Spleen (tissue), 13 donors: ENCODE measurements at regions of chr14 and their contacts with region 1.

Region 1: DNA sequence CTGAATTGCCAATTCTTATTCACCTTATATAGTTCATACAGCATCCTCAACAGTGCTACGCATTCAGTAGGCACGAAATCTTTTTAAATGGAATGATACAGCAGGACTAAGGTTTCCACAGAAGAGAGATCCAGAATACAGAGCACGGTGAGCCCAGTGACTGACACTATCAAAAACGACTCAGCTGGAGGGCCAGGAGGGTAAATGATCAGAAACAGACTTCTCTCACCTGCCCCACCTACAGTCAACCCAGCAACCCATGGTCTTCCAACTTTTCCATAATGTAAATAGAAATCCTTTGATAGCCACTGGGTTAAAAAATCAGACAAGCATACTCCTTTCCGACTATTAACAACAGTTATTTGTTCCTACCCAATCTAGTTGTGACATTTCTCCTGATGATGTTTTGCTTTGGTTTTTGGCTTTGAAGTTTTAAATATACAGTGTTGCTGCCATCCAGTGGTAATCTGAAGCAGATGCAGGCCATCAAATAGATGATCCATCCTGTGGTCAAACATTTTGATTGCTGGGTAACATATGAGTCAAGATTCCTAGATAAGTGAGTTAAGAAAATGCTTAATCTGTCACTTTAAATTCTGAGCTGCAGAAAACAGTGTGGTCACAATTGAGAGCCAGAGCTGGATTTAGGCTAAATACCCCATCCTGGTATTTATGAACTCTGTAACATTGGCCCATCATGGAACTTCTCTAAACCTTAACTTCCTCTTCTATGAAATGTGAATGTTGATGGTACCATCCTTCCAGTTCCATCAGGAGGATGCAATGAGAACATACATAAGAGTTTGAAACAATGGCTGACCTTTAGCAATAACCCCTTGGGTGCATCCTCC is 42.0 kb downstream of the GPHB5 start:
- DNase-seq: no peak
- H3K4me3 ChIP-seq: no peak overlapping the region
- H3K27ac ChIP-seq: no peak overlapping the region
- H3K4me1 ChIP-seq: peaks cover 0 to 4% (median 0%) of the 10 kb centered on the region in 6 donors
- H3K27me3 ChIP-seq: no peaks in the 10 kb centered on the region
- CTCF ChIP-seq: peak; percentile 46 to 84 (median 70)
- POLR2A ChIP-seq: no peak

Region 2: GRCh38 chr14:62162998-62163589 is 1113.6 kb before region 1 on chr14:
- intact Hi-C with region 1: loop called (anchors 10 kb)
- DNase-seq: no peak
- H3K4me3 ChIP-seq: no peak overlapping the region
- H3K27ac ChIP-seq: no peak overlapping the region
- H3K4me1 ChIP-seq: no peaks in the 10 kb centered on the region
- H3K27me3 ChIP-seq: peaks cover 0 to 34% (median 0%) of the 10 kb centered on the region in 7 donors
- CTCF ChIP-seq: peak in 9 of 11 experiments; percentile 18 to 74 (median 58)
- POLR2A ChIP-seq: no peak

Region 3: GRCh38 chr14:63174760-63175211 is 101.9 kb before region 1 on chr14:
- intact Hi-C with region 1: loop called (anchors 5 kb)
- DNase-seq: no peak
- H3K4me3 ChIP-seq: no peak overlapping the region
- H3K27ac ChIP-seq: no peak overlapping the region
- H3K4me1 ChIP-seq: no peaks in the 10 kb centered on the region
- H3K27me3 ChIP-seq: peaks cover 0 to 8% (median 0%) of the 10 kb centered on the region in 7 donors
- CTCF ChIP-seq: peak in 8 of 11 experiments; percentile 10 to 55 (median 46)
- POLR2A ChIP-seq: no peak

Region 4: DNA sequence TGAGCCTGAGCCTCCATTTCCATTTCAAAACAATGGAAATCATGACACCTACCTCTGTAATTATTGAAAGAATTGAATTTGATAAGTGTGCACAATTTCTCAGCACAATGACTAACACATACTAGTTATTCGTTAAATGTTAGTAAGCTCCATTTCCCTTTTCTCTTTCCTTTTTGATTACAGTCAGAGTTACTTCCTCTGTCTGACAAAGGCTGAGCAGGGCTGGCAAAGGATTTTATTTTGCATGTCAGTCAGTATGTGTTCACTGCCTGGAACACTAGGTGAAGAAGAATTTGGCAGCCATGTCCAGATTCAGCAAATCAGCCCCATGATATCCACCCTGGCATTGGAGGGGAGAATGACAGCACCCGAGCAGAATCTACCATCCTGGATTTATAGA is 84.6 kb before region 1 on chr14:
- intact Hi-C with region 1: no loop called
- DNase-seq: no peak
- H3K4me3 ChIP-seq: no peak overlapping the region
- H3K27ac ChIP-seq: peak overlapping the region in 4 of 8 donors; percentile 37 to 55 (median 45)
- H3K4me1 ChIP-seq: no peaks in the 10 kb centered on the region
- H3K27me3 ChIP-seq: no peaks in the 10 kb centered on the region
- CTCF ChIP-seq: no peak
- POLR2A ChIP-seq: no peak

Region 5: DNA sequence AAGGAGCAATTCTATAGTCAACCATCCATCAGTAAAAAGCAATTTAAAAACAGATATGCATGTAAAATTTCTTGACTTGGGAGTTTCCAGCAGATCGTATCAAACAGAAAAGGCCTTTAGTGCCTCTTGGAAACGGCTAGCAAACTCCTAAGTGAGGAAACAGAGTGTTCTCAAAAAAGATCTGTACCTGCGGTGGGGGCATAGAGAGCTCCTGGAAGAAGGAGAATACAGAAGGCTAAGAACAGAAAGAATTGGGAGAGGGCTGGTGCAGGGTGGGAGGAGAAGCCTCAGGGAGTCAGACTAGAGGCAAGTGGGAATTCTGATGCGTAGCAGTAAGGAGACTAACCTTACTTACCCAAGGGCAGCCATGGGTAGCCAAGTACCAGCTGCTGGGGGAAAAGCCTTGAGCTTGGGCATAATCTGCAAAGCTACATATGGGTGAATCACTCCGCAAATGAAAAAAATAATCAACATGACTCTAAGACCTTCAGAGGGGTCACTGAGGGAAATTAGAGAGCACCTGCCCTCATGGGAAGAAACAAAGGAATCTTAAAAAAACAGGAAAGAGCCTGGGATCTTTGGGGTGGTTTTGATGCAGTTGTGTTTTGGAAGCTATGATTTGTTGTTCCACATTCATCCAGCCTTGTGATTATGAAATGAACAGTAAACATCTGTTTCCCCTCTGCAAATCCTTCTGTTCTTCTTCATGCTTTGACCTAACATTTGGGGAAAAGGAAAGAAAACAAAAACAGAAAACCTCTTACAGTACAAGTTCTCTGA is 62.1 kb before region 1 on chr14:
- intact Hi-C with region 1: no loop called
- DNase-seq: no peak
- H3K4me3 ChIP-seq: no peak overlapping the region
- H3K27ac ChIP-seq: peak overlapping the region in 3 of 8 donors; percentile 15 to 37 (median 35)
- H3K4me1 ChIP-seq: peaks cover 0 to 6% (median 0%) of the 10 kb centered on the region in 6 donors
- H3K27me3 ChIP-seq: no peaks in the 10 kb centered on the region
- CTCF ChIP-seq: no peak
- POLR2A ChIP-seq: no peak